ENCODE measurements at regions of chr2 and their contacts with region 1.

Region 1: GRCh38 chr2:179129574-179130238 is 79.8 kb upstream of the CCDC141 start:
- DNase-seq: peak; percentile 42
- H3K4me3 ChIP-seq: no peak overlapping the region
- H3K27ac ChIP-seq: no peak overlapping the region
- H3K4me1 ChIP-seq: no peaks in the 10 kb centered on the region
- CTCF ChIP-seq: peak; percentile 97

Region 2: DNA sequence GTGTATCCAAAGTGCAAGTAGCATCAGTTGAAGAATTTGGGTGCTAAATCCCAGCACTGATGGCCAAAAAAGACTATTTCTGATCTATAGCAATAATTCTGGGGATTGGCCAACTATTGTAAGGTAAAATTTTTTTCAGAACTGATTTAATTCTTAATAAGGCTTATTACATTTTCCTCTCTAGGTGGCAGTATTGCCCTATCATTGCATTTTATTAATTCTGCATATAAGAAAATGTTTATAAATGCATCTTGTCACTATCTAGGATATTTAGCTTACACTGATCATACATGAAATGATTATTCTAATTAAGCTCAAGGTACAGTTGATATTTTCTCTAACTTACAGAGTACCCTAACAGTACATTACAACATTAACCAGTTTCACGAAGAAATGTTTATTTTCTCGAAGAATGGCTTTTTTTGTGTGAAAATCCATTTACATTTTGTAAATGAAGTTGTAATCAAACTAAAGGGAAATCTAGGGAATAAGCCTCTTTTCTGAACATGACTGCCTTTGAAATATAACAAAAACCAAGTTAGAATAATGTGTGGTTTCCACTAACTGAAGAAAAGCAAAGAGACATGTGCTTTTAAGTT is 333.5 kb before region 1 on chr2:
- CTCF ChIA-PET with region 1: no interaction called
- POLR2A ChIA-PET with region 1: no interaction called
- intact Hi-C with region 1: loop called (anchors 1 kb)
- DNase-seq: peak; percentile 41
- H3K4me3 ChIP-seq: no peak overlapping the region
- H3K27ac ChIP-seq: no peak overlapping the region
- H3K4me1 ChIP-seq: no peaks in the 10 kb centered on the region
- CTCF ChIP-seq: peak; percentile 86

Region 3: DNA sequence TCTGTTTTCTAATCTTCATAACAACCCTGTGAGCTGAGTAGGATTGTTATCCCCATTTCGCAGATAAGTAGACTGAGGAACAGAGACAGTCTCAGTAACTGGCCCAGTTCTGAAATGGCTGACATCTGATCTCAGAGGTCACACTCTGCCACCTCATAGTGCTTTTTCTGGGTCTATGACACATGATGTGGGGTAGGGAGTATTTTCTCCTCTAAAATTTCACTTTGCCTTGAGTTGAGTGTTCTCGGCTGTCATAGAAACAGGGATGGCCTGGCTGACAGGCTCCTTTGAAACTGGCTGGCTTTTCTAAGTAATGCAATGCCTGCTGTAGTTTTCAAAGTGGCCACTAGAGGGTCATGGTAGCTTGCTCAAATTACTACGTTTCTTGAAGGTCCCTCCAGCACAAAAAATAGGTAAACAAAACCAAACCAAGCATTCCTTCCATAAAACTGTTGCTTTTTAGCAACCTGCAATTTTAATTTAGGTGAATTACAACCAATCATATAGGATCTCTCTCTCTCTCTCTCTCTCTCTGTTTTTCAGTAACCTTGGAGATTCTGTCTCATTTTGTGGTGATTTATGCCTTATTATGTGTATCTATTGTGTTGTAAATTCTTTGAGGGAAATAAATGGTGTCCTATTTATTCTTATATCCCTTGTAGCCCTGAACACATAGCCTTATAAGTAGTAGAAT is 238.3 kb before region 1 on chr2:
- CTCF ChIA-PET with region 1: interaction called, 3 read pairs
- POLR2A ChIA-PET with region 1: no interaction called
- intact Hi-C with region 1: loop called (anchors 1 kb)
- DNase-seq: peak; percentile 68
- H3K4me3 ChIP-seq: no peak overlapping the region
- H3K27ac ChIP-seq: no peak overlapping the region
- H3K4me1 ChIP-seq: no peaks in the 10 kb centered on the region
- CTCF ChIP-seq: peak; percentile 96

Region 4: GRCh38 chr2:178976351-178976750 is 153.4 kb before region 1 on chr2:
- CTCF ChIA-PET with region 1: no interaction called
- POLR2A ChIA-PET with region 1: no interaction called
- intact Hi-C with region 1: loop called (anchors 5 kb)
- DNase-seq: no peak
- H3K4me3 ChIP-seq: no peak overlapping the region
- H3K27ac ChIP-seq: no peak overlapping the region
- H3K4me1 ChIP-seq: no peaks in the 10 kb centered on the region
- CTCF ChIP-seq: no peak

Region 5: GRCh38 chr2:179020156-179020750 is 109.5 kb before region 1 on chr2:
- CTCF ChIA-PET with region 1: interaction called, 8 read pairs
- POLR2A ChIA-PET with region 1: interaction called, 4 read pairs
- intact Hi-C with region 1: loop called (anchors 5 kb)
- DNase-seq: peak; percentile 60
- H3K4me3 ChIP-seq: no peak overlapping the region
- H3K27ac ChIP-seq: peak overlapping the region; percentile 50
- H3K4me1 ChIP-seq: peaks cover 26% of the 10 kb centered on the region
- CTCF ChIP-seq: peak; percentile 81

Measured in OCI-LY7 (cell line).